Activated CD4-positive, alpha-beta T cell treated with anti-CD3 and anti-CD28 coated beads, Interleukin-2, amount 10 ng/mL, durations not matched to agents 24 days and 14 days (primary cell): ENCODE measurements at regions of chr16 and their contacts with region 1.

Region 1: GRCh38 chr16:4475880-4476788 is at the start of gene HMOX2:
- DNase-seq: peak; percentile 99
- H3K4me3 Mint-ChIP-seq: peak within 1 kb of the TSS; percentile 92
- H3K27ac Mint-ChIP-seq: peak within 1 kb of the TSS; percentile 82
- H3K4me1 Mint-ChIP-seq: peaks cover 29% of the 10 kb centered on the region
- H3K27me3 Mint-ChIP-seq: no peaks in the 10 kb centered on the region
- total RNA-seq, gene HMOX2: 64.3 and 70.0 TPM in 2 replicates

Region 2: DNA sequence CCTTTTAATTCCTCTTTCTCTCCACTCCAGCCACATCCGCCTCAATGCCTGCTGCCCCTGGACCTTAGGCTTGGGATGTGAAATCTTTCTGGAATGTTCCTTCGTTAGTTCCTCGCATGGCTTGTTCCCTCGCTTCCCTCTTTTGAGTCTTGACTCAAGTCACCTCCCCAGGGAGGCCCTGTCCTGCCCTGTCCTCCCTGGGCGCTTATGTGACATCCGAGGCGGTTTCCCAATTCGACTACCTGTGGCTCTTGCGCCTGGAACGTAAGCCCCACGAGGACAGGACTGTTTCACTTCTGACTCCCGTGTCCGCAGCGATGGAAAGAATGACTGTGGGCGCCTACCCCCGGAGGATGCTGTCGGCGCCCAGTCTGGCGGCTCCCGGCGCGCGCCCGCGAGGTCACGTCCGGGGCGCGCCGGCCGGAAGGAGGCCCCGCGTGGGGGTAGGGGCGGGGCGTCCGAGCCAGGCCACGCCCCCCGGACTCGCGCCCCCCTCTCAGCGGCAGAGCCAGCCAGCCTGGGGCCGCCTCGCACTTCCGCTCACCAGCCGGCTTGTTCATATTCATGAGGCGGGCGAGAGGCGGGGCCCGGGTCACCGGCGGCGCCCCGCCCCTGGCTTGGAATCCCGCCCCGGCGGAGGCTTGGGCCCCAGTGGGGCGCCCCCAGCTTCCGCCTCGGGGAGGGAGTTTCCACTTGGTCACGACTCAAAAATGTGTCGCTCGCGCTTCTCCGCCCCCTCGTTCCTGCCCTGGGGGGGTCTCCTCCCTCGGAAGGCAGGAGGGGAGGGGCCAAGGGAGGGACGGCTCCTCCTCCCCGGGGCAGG is 168.7 kb before region 1 on chr16:
- intact Hi-C with region 1: no loop called
- DNase-seq: peak; percentile 99
- H3K4me3 Mint-ChIP-seq: peak overlapping the region; percentile 98
- H3K27ac Mint-ChIP-seq: peak overlapping the region; percentile 98
- H3K4me1 Mint-ChIP-seq: peaks cover 26% of the 10 kb centered on the region
- H3K27me3 Mint-ChIP-seq: peaks cover 2% of the 10 kb centered on the region

Region 3: GRCh38 chr16:4416200-4417032 is 59.7 kb before region 1 on chr16 and contains the start of gene CORO7:
- intact Hi-C with region 1: loop called (anchors 1 kb)
- DNase-seq: peak; percentile 100
- H3K4me3 Mint-ChIP-seq: peak within 1 kb of the TSS; percentile 93
- H3K27ac Mint-ChIP-seq: peak within 1 kb of the TSS; percentile 89
- H3K4me1 Mint-ChIP-seq: peaks cover 34% of the 10 kb centered on the region
- H3K27me3 Mint-ChIP-seq: peaks cover 6% of the 10 kb centered on the region
- total RNA-seq, gene CORO7: 86.3 and 93.3 TPM in 2 replicates

Region 4: GRCh38 chr16:4506450-4506849 is 30.3 kb after region 1 on chr16:
- intact Hi-C with region 1: loop called (anchors 1 kb)
- DNase-seq: peak; percentile 88
- H3K4me3 Mint-ChIP-seq: peak overlapping the region; percentile 80
- H3K27ac Mint-ChIP-seq: peak overlapping the region; percentile 87
- H3K4me1 Mint-ChIP-seq: peaks cover 44% of the 10 kb centered on the region
- H3K27me3 Mint-ChIP-seq: no peaks in the 10 kb centered on the region

Region 5: DNA sequence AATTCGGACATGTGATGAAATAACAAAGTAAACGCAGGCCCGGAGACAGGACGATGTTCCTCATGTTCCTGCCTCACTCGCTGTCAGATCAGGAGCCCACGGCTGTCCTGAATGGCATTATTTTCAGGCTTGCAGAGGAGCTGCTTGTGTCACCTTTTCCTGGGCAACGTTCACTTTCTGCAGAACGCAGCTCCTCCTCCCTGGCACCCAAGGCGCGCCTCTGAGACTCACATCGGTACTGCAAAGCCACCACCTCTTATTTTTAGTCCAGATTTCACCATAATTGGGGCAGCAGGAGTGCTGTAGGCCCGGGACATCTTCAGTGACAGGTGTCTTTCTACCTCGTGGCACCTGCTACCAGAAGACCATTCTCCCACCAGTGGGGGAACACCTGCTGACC is 72.0 kb after region 1 on chr16:
- intact Hi-C with region 1: loop called (anchors 1 kb)
- DNase-seq: no peak
- H3K4me3 Mint-ChIP-seq: no peak overlapping the region
- H3K27ac Mint-ChIP-seq: no peak overlapping the region
- H3K4me1 Mint-ChIP-seq: peaks cover 7% of the 10 kb centered on the region
- H3K27me3 Mint-ChIP-seq: peaks cover 19% of the 10 kb centered on the region